ENCODE measurements at regions of chr9 and their contacts with region 1.

Region 1: DNA sequence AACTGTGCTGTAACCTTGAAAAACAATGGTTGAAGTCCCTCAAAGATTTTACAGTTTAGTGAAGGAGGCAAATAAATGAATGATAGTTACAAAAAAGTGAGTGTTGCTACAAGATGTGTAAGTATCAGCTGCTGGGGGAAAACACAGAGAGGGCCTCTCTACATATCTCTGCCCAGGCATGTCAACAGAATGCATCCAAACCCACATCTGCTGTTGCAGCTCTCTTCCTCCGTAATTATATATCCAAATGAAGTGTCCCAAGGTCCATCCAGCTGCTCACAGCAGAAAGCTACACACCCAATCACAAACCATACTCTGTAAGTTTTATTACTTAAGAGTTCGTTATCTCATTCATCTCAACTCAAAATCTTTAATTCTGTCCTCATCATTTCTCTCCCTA is 584.6 kb downstream of the ANXA1 start:
- DNase-seq: no peak
- ATAC-seq: no peak
- H3K4me3 ChIP-seq: no peak overlapping the region
- H3K27ac ChIP-seq: no peak overlapping the region
- H3K4me1 ChIP-seq: no peaks in the 10 kb centered on the region
- H3K27me3 ChIP-seq: no peaks in the 10 kb centered on the region
- CTCF ChIP-seq: no peak
- EP300 ChIP-seq: no peak
- POLR2A ChIP-seq: no peak
- RAD21 ChIP-seq: no peak

Region 2: DNA sequence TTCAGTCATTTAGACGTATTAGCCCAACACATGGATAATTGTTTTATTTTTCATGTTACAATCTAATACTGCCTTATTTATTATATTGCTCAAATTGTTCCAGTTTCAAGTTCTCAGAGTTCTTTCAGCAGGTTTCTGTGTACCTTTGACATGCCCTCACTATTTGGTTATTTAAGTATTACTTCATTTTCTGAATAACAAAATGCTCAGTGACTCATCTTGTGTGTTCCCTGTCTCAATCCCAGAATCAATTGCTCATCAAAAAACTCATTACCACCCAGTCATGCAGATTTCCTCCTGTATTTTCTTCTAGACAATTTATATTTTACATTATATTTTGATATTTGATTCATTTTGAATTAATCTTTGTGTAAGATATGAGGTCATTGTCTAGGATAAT is 22.0 kb before region 1 on chr9:
- CTCF ChIA-PET with region 1: no interaction called
- POLR2A ChIA-PET with region 1: no interaction called
- RAD21 ChIA-PET with region 1: no interaction called
- SMC1A ChIA-PET with region 1: no interaction called
- in situ Hi-C with region 1: no loop called
- intact Hi-C with region 1: loop called (anchors 2 kb)
- DNase-seq: no peak
- ATAC-seq: no peak
- H3K4me3 ChIP-seq: no peak overlapping the region
- H3K27ac ChIP-seq: no peak overlapping the region
- H3K4me1 ChIP-seq: no peaks in the 10 kb centered on the region
- H3K27me3 ChIP-seq: no peaks in the 10 kb centered on the region
- CTCF ChIP-seq: no peak
- EP300 ChIP-seq: no peak
- POLR2A ChIP-seq: no peak
- RAD21 ChIP-seq: no peak